Heart left ventricle (tissue), 16 donors: ENCODE measurements at regions of chr2 and their contacts with region 1.

Region 1: GRCh38 chr2:50401772-50402653 is 629.9 kb downstream of the NRXN1 start:
- DNase-seq: peak in 1 of 5 donors; percentile 17
- ATAC-seq: no peak
- H3K4me3 ChIP-seq: no peak overlapping the region
- H3K27ac ChIP-seq: no peak overlapping the region
- H3K4me1 ChIP-seq: no peaks in the 10 kb centered on the region
- H3K27me3 ChIP-seq: peaks cover 0 to 8% (median 0%) of the 10 kb centered on the region in 9 donors
- CTCF ChIP-seq: peak; percentile 46 to 74 (median 64)
- POLR2A ChIP-seq: no peak

Region 2: GRCh38 chr2:48600204-48600813 is 1801.7 kb before region 1 on chr2:
- intact Hi-C with region 1: loop called in 2 of 10 experiments (anchors 10 kb)
- DNase-seq: no peak
- ATAC-seq: peak in 2 of 4 donors; percentile 39 to 63
- H3K4me3 ChIP-seq: no peak overlapping the region
- H3K27ac ChIP-seq: no peak overlapping the region
- H3K4me1 ChIP-seq: no peaks in the 10 kb centered on the region
- H3K27me3 ChIP-seq: no peaks in the 10 kb centered on the region
- CTCF ChIP-seq: peak; percentile 51 to 80 (median 66)
- POLR2A ChIP-seq: no peak

Region 3: GRCh38 chr2:49616800-49617199 is 785.2 kb before region 1 on chr2:
- intact Hi-C with region 1: loop called in 5 of 10 experiments (anchors 5 to 10 kb)
- DNase-seq: no peak
- ATAC-seq: peak in 1 of 4 donors; percentile 36
- H3K4me3 ChIP-seq: no peak overlapping the region
- H3K27ac ChIP-seq: no peak overlapping the region
- H3K4me1 ChIP-seq: no peaks in the 10 kb centered on the region
- H3K27me3 ChIP-seq: no peaks in the 10 kb centered on the region
- CTCF ChIP-seq: peak in 10 of 12 donors; percentile 16 to 57 (median 42)
- POLR2A ChIP-seq: no peak

Region 4: DNA sequence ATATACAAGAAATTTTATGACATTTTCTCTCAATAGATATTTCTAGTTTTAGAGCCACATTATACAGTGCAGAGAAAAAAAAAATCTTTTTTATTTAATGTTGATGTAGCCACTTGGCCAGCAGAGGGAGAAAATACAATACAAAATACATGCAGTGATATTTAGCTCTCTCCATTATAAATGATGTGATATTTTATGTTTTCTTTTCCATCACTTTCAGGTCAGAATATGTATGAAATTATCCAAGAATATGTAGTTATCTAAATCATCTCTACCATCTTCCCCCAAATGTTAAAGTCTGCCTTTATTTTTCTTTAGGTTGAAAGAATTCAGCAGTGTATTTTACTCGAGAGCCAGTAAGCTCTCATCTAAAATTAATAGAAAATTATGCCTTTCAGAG is 714.1 kb before region 1 on chr2:
- intact Hi-C with region 1: loop called in 4 of 10 experiments (anchors 5 to 10 kb)
- DNase-seq: no peak
- ATAC-seq: no peak
- H3K4me3 ChIP-seq: no peak overlapping the region
- H3K27ac ChIP-seq: no peak overlapping the region
- H3K4me1 ChIP-seq: no peaks in the 10 kb centered on the region
- H3K27me3 ChIP-seq: no peaks in the 10 kb centered on the region
- CTCF ChIP-seq: peak in 10 of 12 donors; percentile 25 to 52 (median 40)
- POLR2A ChIP-seq: no peak

Region 5: GRCh38 chr2:49770919-49771318 is 631.1 kb before region 1 on chr2:
- intact Hi-C with region 1: loop called in 1 of 10 experiments (anchors 5 kb)
- DNase-seq: peak in 4 of 5 donors; percentile 11 to 59 (median 45)
- ATAC-seq: peak; percentile 73 to 88 (median 84)
- H3K4me3 ChIP-seq: no peak overlapping the region
- H3K27ac ChIP-seq: no peak overlapping the region
- H3K4me1 ChIP-seq: no peaks in the 10 kb centered on the region
- H3K27me3 ChIP-seq: no peaks in the 10 kb centered on the region
- CTCF ChIP-seq: peak in 11 of 12 donors; percentile 13 to 58 (median 42)
- POLR2A ChIP-seq: no peak

Region 6: GRCh38 chr2:50118905-50119702 is 282.9 kb before region 1 on chr2:
- intact Hi-C with region 1: no loop called
- DNase-seq: no peak
- ATAC-seq: no peak
- H3K4me3 ChIP-seq: no peak overlapping the region
- H3K27ac ChIP-seq: no peak overlapping the region
- H3K4me1 ChIP-seq: no peaks in the 10 kb centered on the region
- H3K27me3 ChIP-seq: no peaks in the 10 kb centered on the region
- CTCF ChIP-seq: no peak
- POLR2A ChIP-seq: no peak